ENCODE measurements at regions of chr1 and their contacts with region 1.

Region 1: DNA sequence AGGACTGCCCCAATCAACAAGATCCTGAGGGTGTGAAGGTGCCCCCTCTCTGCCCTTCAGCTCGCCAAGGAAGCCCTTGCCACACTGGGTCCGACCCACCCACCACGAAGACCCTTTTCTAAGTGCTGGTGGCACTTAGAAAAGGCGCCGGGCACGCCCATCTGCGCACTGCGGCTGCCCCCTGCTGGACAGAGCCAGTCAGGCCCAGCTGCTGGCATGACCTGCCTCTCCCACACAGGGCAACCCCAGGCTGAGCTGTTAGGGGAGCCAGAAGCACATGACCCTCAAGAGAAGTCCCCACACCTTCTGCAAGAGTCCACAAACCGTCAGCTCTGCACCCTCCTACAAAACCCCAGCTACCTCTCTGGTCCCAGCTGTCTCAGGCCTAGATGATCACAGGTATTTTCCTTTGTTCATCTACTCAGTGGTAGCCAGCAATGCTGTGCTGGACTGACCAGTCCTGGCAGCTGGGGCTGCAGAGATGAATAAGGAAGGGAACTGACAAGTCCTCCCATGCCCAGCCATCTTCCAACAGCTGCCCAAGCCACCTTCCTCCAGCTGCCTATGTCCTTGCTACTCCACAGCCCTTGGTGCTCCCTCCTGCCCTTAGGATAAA is 40.0 kb upstream of the ZC3H12A start:
- DNase-seq: peak; percentile 36
- H3K4me3 ChIP-seq: no peak overlapping the region
- H3K27ac ChIP-seq: no peak overlapping the region
- H3K4me1 ChIP-seq: no peaks in the 10 kb centered on the region
- H3K27me3 ChIP-seq: peaks cover 2% of the 10 kb centered on the region
- CTCF ChIP-seq: peak; percentile 76 to 83 (median 79)
- POLR2A ChIP-seq: no peak

Region 2: GRCh38 chr1:36576118-36576517 is 858.3 kb before region 1 on chr1:
- intact Hi-C with region 1: loop called (anchors 2 kb)
- DNase-seq: no peak
- H3K4me3 ChIP-seq: no peak overlapping the region
- H3K27ac ChIP-seq: no peak overlapping the region
- H3K4me1 ChIP-seq: no peaks in the 10 kb centered on the region
- H3K27me3 ChIP-seq: peaks cover 4% of the 10 kb centered on the region
- CTCF ChIP-seq: peak; percentile 18 to 59 (median 51)
- POLR2A ChIP-seq: no peak

Region 3: DNA sequence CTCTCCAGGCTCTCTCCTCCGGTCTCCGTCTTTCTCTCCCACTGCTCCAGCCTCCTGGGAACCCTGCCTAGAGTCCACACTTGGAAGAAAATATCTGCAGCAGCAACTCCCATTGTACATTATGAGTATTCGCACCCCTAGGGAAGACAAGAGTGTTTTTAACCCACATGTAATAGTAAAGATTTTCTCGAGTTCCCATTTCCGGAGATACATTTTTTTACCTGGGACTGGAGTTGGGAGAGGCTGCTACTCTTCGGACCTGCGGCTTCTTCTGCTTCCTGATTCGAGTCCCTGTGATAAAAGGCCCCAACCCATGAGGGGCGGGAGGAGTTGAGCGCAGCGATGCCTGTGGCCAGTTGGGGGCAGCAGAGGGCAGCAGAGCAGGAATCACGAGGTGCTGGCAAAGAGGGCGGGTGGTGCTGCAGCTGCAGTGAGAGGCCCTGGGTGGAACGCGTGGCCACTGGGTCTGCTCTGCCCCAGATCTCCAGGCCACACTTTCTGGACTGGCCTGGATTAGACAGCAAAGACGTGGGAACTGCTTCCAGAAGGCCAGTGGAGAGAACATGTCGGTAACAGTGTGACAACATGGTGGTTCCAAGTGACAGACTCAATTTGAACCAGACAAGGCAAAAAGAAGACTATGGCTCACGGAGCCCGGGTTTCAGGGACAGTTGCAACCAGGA is 730.7 kb before region 1 on chr1:
- intact Hi-C with region 1: loop called (anchors 2 kb)
- DNase-seq: peak; percentile 46
- H3K4me3 ChIP-seq: no peak overlapping the region
- H3K27ac ChIP-seq: no peak overlapping the region
- H3K4me1 ChIP-seq: no peaks in the 10 kb centered on the region
- H3K27me3 ChIP-seq: peaks cover 2% of the 10 kb centered on the region
- CTCF ChIP-seq: peak; percentile 38 to 81 (median 76)
- POLR2A ChIP-seq: no peak

Measured in prostate gland (tissue), 2 donors.